A549 (cell line): ENCODE measurements at regions of chr9 and their contacts with region 1.

Region 1: GRCh38 chr9:100714372-100715099 is 136.7 kb downstream of the CAVIN4 start:
- DNase-seq: peak; percentile 56 to 66
- ATAC-seq: peak; percentile 90 to 94
- H3K4me3 ChIP-seq: no peak overlapping the region
- H3K27ac ChIP-seq: no peak overlapping the region
- H3K4me1 ChIP-seq: no peaks in the 10 kb centered on the region
- CTCF ChIP-seq: peak; percentile 72
- EP300 ChIP-seq: no peak
- POLR2A ChIP-seq: no peak
- RAD21 ChIP-seq: peak; percentile 64 to 75

Region 2: GRCh38 chr9:101235105-101235866 is 520.8 kb after region 1 on chr9:
- CTCF ChIA-PET with region 1: interaction called, 10 read pairs
- POLR2A ChIA-PET with region 1: no interaction called
- DNase-seq: peak in 1 of 2 experiments; percentile 35
- ATAC-seq: peak; percentile 66 to 73
- H3K4me3 ChIP-seq: no peak overlapping the region
- H3K27ac ChIP-seq: no peak overlapping the region
- H3K4me1 ChIP-seq: no peaks in the 10 kb centered on the region
- CTCF ChIP-seq: peak; percentile 53
- EP300 ChIP-seq: no peak
- POLR2A ChIP-seq: no peak
- RAD21 ChIP-seq: peak; percentile 67 to 72